ENCODE measurements at regions of chr1 and their contacts with region 1.

Region 1: GRCh38 chr1:236759252-236759859 is 35.7 kb upstream of the MTR start:
- DNase-seq: peak in 6 of 9 donors; percentile 13 to 57 (median 42)
- ATAC-seq: peak; percentile 59
- H3K4me3 ChIP-seq: no peak overlapping the region
- H3K4me3 Mint-ChIP-seq: peak overlapping the region in 5 of 10 donors; percentile 5 to 66 (median 19)
- H3K27ac ChIP-seq: no peak overlapping the region
- H3K27ac Mint-ChIP-seq: peak overlapping the region in 1 of 9 donors; percentile 78
- H3K4me1 ChIP-seq: no peaks in the 10 kb centered on the region
- H3K4me1 Mint-ChIP-seq: peaks cover 0 to 5% (median 4%) of the 10 kb centered on the region in 7 donors
- H3K27me3 ChIP-seq: no peaks in the 10 kb centered on the region
- H3K27me3 Mint-ChIP-seq: peaks cover 0 to 10% (median 0%) of the 10 kb centered on the region in 5 donors

Region 2: DNA sequence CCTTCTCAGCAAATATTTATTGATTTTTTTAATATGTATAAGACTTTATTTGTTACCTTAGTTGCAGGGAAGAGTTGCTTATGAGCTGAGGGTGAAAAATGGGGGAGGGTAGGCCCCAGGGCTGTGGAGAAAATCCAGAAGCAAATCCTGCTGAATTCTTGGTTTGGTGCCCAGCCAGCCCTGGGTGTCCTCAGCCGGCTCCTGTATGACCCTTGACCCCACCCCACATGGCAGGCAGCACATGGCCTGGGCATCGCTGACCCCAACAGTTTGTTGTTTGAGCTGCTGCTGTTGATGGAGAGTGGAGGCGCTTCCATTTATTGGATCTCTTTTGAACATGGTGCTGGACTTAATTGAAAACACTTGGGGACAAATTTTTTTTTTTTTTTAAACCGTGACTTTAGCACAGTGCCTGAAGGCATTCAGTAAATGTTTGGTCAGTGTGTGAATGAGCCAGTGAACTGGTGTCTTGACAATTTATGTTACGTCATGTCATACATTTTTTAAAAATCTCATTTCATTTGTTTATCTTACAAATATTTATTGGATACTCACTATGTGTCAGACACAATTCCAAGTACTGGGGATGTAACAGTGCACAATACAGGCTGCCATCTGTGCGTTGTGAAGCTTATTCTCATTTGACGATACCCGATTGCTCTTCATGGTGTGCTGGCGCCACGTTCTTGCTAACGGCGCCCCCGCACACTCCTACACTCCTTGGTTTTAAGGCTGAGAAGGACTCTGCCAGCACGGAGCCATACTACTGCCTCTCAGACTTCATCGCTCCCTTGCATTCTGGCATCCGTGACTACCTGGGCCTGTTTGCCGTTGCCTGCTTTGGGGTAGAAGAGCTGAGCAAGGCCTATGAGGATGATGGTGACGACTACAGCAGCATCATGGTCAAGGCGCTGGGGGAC is 134.5 kb after region 1 on chr1:
- CTCF ChIA-PET with region 1: no interaction called
- POLR2A ChIA-PET with region 1: no interaction called
- intact Hi-C with region 1: no loop called
- DNase-seq: no peak
- ATAC-seq: no peak
- H3K4me3 ChIP-seq: no peak overlapping the region
- H3K4me3 Mint-ChIP-seq: no peak overlapping the region
- H3K27ac ChIP-seq: no peak overlapping the region
- H3K27ac Mint-ChIP-seq: no peak overlapping the region
- H3K4me1 ChIP-seq: no peaks in the 10 kb centered on the region
- H3K4me1 Mint-ChIP-seq: peaks cover 0 to 6% (median 0%) of the 10 kb centered on the region in 7 donors
- H3K27me3 ChIP-seq: no peaks in the 10 kb centered on the region
- H3K27me3 Mint-ChIP-seq: no peaks in the 10 kb centered on the region

Region 3: DNA sequence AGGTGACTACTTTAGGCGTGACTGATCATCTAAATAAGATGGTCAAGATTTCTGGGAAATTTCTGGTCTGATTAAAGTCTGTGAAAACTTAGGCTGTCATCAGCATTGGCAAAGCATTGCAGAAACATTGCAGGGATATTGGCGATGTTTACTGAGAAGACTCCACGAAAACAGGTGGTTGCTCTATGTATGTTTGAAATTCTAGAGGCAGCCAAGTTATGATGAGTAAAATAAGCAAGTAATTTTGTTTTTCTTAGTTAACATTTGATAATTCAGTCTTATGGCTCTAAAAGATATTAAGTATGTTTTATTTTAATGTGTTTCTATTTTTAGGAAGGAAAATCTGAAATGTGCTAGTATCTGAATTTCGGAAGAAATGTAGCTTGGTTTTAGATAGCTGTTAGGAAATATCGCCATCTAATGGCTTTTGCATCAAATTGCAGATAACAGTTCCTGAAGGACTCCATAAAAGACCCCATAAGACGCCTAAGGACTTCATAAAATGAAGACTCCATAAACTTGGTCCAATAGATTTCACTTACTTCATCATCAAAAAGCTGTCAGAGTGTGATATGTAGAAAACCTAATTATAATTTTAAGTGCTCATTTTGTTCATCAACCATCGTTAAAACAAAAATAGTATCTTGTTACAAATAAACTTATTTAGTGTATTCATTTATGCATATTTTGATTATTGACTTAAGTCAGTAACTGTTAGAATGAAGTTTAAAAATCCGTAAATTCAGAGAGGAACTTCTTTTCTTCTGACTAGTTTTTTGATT is 627.2 kb after region 1 on chr1:
- CTCF ChIA-PET with region 1: no interaction called
- POLR2A ChIA-PET with region 1: no interaction called
- intact Hi-C with region 1: loop called in 1 of 2 experiments (anchors 1 kb)
- DNase-seq: no peak
- ATAC-seq: no peak
- H3K4me3 ChIP-seq: no peak overlapping the region
- H3K4me3 Mint-ChIP-seq: no peak overlapping the region
- H3K27ac ChIP-seq: no peak overlapping the region
- H3K27ac Mint-ChIP-seq: no peak overlapping the region
- H3K4me1 ChIP-seq: no peaks in the 10 kb centered on the region
- H3K4me1 Mint-ChIP-seq: no peaks in the 10 kb centered on the region
- H3K27me3 ChIP-seq: no peaks in the 10 kb centered on the region
- H3K27me3 Mint-ChIP-seq: peaks cover 0 to 5% (median 2%) of the 10 kb centered on the region in 5 donors